WTC11 (cell line): ENCODE measurements at regions of chr5 and their contacts with region 1.

Region 1: GRCh38 chr5:43484106-43484849 is 613 bp upstream of the TMEM267 start:
- DNase-seq: peak; percentile 82
- ATAC-seq: peak; percentile 73
- H3K4me3 Mint-ChIP-seq: peak overlapping the region; percentile 98
- H3K27ac Mint-ChIP-seq: peak overlapping the region; percentile 100
- H3K4me1 Mint-ChIP-seq: peaks cover 9% of the 10 kb centered on the region
- H3K27me3 Mint-ChIP-seq: no peaks in the 10 kb centered on the region
- CTCF ChIP-seq: peak; percentile 15; the same call in 1 of the 2 replicates

Region 2: DNA sequence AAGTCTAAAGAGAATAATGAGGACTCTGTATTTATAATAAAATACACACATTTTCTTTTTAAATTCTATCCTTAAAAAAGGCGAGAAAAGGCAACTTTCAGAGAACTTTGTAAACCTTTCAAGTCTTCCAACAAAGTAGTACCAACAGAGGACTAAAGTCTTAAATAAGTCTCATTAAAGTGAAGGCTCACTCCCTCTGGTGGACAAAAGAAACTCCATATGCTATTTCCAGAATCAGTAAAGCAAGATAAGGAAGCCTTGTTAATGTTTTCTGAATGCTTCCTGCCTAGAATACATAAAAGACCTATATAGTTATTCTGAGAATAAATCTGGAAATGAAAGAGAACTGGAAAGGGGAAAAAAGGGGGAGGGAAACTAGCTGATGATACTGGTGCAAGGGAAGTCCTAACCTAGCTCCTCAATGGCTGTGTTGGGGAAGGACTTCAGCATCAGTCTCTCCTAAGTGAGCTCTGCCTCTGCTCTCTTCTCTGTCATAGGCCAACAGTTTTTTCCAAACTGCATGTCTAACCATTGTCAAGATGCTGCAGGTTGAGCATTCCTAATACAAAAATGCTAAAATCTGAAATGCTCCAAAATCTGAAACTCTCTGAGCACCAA is 178.2 kb before region 1 on chr5:
- CTCF ChIA-PET with region 1: interaction called, 13 read pairs
- POLR2A ChIA-PET with region 1: interaction called, 5 read pairs
- DNase-seq: no peak
- ATAC-seq: peak; percentile 50
- H3K4me3 Mint-ChIP-seq: no peak overlapping the region
- H3K27ac Mint-ChIP-seq: 0 out of 2 replicates have a peak overlapping the region, but pooled peaks have one; percentile 22
- H3K4me1 Mint-ChIP-seq: peaks cover 79% of the 10 kb centered on the region
- H3K27me3 Mint-ChIP-seq: no peaks in the 10 kb centered on the region
- CTCF ChIP-seq: peak; percentile 41; the same call in 1 of the 2 replicates

Region 3: GRCh38 chr5:43313035-43313853 is 171.0 kb before region 1 on chr5 and contains the start of gene HMGCS1:
- CTCF ChIA-PET with region 1: interaction called, 31 read pairs
- POLR2A ChIA-PET with region 1: interaction called, 8 read pairs
- DNase-seq: peak; percentile 98
- ATAC-seq: peak; percentile 97
- H3K4me3 Mint-ChIP-seq: peak within 1 kb of the TSS; percentile 94
- H3K27ac Mint-ChIP-seq: peak within 1 kb of the TSS; percentile 99
- H3K4me1 Mint-ChIP-seq: peaks cover 52% of the 10 kb centered on the region
- H3K27me3 Mint-ChIP-seq: peaks cover 3% of the 10 kb centered on the region; the same call in 1 of the 2 replicates
- CTCF ChIP-seq: no peak
- total RNA-seq, gene HMGCS1: 176 to 199 TPM (median 178 TPM) in 3 replicates

Region 4: DNA sequence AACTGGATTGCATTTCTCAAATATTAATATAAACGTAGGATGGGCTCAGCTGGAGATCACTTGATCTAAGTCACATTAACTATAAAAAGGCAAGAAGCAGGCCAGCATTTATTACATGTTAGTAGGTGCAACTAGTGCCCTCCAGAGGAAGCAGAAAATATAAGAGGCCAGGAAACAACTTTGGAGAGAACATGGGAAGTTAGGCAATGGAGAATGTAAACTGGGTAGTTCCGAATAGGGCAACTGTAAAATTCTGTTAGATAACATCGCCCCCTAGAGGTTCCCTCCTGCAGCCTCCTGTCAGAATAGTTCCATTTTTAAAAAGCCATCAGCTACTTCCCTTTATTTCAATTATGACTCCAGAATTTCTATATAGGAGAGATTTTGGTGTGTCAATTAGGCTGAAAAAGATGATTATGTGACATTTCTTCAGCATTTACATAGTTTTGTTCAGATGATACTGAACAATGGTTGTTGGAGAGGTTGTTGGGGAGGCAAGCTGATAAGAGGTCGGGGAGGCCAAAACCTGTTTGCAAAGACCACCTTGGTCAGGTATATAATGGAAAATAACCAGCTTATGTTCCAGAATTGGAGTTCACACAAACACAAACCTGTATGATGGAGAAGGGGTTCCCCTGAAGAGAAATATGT is 94.5 kb before region 1 on chr5:
- CTCF ChIA-PET with region 1: interaction called, 31 read pairs
- POLR2A ChIA-PET with region 1: interaction called, 4 read pairs
- DNase-seq: peak; percentile 39
- ATAC-seq: peak; percentile 98
- H3K4me3 Mint-ChIP-seq: no peak overlapping the region
- H3K27ac Mint-ChIP-seq: no peak overlapping the region
- H3K4me1 Mint-ChIP-seq: no peaks in the 10 kb centered on the region
- H3K27me3 Mint-ChIP-seq: no peaks in the 10 kb centered on the region; the same call in 1 of the 2 replicates
- CTCF ChIP-seq: peak; percentile 72

Region 5: DNA sequence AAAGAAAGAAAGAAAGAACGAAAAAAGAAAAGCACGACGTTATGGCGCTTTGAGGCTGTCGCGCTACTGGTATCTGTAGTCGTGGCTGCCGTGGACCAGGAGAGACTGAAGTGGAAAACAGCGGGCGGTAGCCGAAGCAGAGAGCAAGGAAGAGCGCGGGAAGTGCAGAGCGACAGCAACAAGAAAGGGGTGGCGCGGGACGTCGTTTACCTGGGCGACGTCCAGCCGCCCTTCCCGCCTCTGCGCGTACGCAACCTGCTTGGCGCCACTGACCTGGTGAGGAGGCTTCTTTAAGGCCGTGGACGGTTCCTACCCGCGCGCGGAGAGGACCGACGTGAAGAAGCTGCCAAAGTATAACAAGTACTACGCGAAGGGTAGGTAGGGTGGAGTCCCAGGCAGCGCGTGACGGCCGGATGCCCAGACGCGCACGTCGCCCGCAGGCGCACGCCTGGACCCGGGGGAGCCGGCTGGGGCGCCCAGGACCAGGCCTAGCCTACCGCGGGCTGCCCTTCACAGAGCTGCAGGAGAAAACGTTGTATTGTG is 87.4 kb before region 1 on chr5:
- CTCF ChIA-PET with region 1: interaction called, 19 read pairs
- POLR2A ChIA-PET with region 1: interaction called, 14 read pairs
- DNase-seq: peak; percentile 59
- ATAC-seq: peak; percentile 91
- H3K4me3 Mint-ChIP-seq: peak overlapping the region; percentile 70
- H3K27ac Mint-ChIP-seq: no peak overlapping the region
- H3K4me1 Mint-ChIP-seq: peaks cover 6% of the 10 kb centered on the region
- H3K27me3 Mint-ChIP-seq: peaks cover 30% of the 10 kb centered on the region
- CTCF ChIP-seq: no peak

Region 6: GRCh38 chr5:43514816-43515677 is 30.8 kb after region 1 on chr5 and contains the start of gene C5orf34:
- CTCF ChIA-PET with region 1: interaction called, 13 read pairs
- POLR2A ChIA-PET with region 1: interaction called, 15 read pairs
- DNase-seq: peak; percentile 98
- ATAC-seq: peak; percentile 99
- H3K4me3 Mint-ChIP-seq: peak within 1 kb of the TSS; percentile 94
- H3K27ac Mint-ChIP-seq: peak within 1 kb of the TSS; percentile 100
- H3K4me1 Mint-ChIP-seq: peaks cover 28% of the 10 kb centered on the region
- H3K27me3 Mint-ChIP-seq: no peaks in the 10 kb centered on the region
- CTCF ChIP-seq: no peak
- total RNA-seq, gene C5orf34: 7.3 to 9.7 TPM (median 9.4 TPM) in 3 replicates